ENCODE measurements at regions of chr10 and their contacts with region 1.

Region 1: DNA sequence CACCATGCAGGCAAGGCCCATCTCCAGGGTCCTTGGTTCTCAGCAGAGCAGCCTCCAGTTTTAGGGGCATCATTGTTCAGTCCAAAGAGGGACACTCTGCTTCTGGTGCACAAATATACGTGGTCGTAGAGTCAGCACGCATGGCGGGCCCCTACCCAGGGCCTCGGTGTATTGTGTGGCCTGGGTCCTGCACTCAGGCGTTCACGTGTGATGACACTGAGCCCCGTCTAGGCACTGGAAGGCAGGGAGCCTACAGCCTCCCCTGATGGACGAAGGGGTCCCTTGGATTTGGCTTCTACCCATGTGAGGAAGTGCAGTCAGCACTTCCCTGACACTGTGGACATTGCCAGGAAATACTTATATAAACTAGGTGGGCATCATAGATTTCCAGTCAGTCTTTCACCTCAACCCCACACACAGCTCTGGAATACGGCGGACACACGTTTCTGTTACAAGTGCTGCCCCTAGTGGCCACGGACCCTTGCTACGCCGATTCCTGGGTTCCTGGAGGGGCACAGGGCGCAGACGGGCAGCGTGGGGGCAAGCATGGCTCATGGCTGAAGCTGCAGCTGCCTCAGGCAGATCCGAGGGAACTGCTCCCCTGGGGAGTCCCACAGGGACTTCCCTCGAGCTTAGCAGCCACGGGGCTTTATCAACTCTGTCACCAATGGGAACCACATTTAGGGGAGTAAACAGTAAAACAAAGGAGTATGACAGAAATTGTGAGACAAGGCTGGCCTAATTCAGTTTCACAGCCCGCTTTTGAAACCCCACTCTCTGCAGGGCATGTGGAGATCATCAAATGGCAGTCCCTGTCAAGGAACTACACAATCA is 25.4 kb downstream of the AIFM2 start:
- DNase-seq: peak; percentile 42
- ATAC-seq: peak; percentile 68
- H3K4me3 Mint-ChIP-seq: no peak overlapping the region
- H3K27ac Mint-ChIP-seq: peak overlapping the region; percentile 75
- H3K4me1 Mint-ChIP-seq: peaks cover 9% of the 10 kb centered on the region
- H3K27me3 Mint-ChIP-seq: no peaks in the 10 kb centered on the region
- CTCF ChIP-seq: peak; percentile 40

Region 2: GRCh38 chr10:69968830-69969229 is 138.3 kb before region 1 on chr10:
- CTCF ChIA-PET with region 1: no interaction called
- POLR2A ChIA-PET with region 1: no interaction called
- intact Hi-C with region 1: no loop called
- DNase-seq: no peak
- ATAC-seq: no peak
- H3K4me3 Mint-ChIP-seq: no peak overlapping the region
- H3K27ac Mint-ChIP-seq: no peak overlapping the region
- H3K4me1 Mint-ChIP-seq: no peaks in the 10 kb centered on the region
- H3K27me3 Mint-ChIP-seq: peaks cover 11% of the 10 kb centered on the region
- CTCF ChIP-seq: no peak

Region 3: GRCh38 chr10:70034232-70034631 is 72.9 kb before region 1 on chr10:
- CTCF ChIA-PET with region 1: no interaction called
- POLR2A ChIA-PET with region 1: no interaction called
- intact Hi-C with region 1: no loop called
- DNase-seq: no peak
- ATAC-seq: no peak
- H3K4me3 Mint-ChIP-seq: no peak overlapping the region
- H3K27ac Mint-ChIP-seq: no peak overlapping the region
- H3K4me1 Mint-ChIP-seq: no peaks in the 10 kb centered on the region
- H3K27me3 Mint-ChIP-seq: peaks cover 7% of the 10 kb centered on the region
- CTCF ChIP-seq: no peak

Region 4: GRCh38 chr10:70093335-70093944 is 13.7 kb before region 1 on chr10:
- CTCF ChIA-PET with region 1: interaction called, 40 read pairs
- POLR2A ChIA-PET with region 1: no interaction called
- intact Hi-C with region 1: no loop called
- DNase-seq: peak; percentile 39
- ATAC-seq: peak; percentile 88
- H3K4me3 Mint-ChIP-seq: peak overlapping the region; percentile 85
- H3K27ac Mint-ChIP-seq: peak overlapping the region; percentile 94
- H3K4me1 Mint-ChIP-seq: peaks cover 44% of the 10 kb centered on the region
- H3K27me3 Mint-ChIP-seq: no peaks in the 10 kb centered on the region
- CTCF ChIP-seq: no peak